Activated CD4-positive, alpha-beta memory T cell treated with anti-CD3 and anti-CD28 coated beads for 36 hours (primary cell): ENCODE measurements at regions of chr13 and their contacts with region 1.

Region 1: GRCh38 chr13:51645154-51645650 is 60.9 kb downstream of the WDFY2 start:
- DNase-seq: peak; percentile 32
- H3K4me3 Mint-ChIP-seq: peak overlapping the region; percentile 38
- H3K27ac Mint-ChIP-seq: peak overlapping the region; percentile 68
- H3K4me1 Mint-ChIP-seq: peaks cover 46% of the 10 kb centered on the region
- H3K27me3 Mint-ChIP-seq: no peaks in the 10 kb centered on the region

Region 2: GRCh38 chr13:51619614-51620013 is 25.6 kb before region 1 on chr13:
- CTCF ChIA-PET with region 1: interaction called, 3 read pairs
- POLR2A ChIA-PET with region 1: interaction called, 10 read pairs
- intact Hi-C with region 1: loop called (anchors 1 kb)
- DNase-seq: peak; percentile 38
- H3K4me3 Mint-ChIP-seq: no peak overlapping the region
- H3K27ac Mint-ChIP-seq: peak overlapping the region; percentile 50
- H3K4me1 Mint-ChIP-seq: peaks cover 44% of the 10 kb centered on the region
- H3K27me3 Mint-ChIP-seq: no peaks in the 10 kb centered on the region

Region 3: DNA sequence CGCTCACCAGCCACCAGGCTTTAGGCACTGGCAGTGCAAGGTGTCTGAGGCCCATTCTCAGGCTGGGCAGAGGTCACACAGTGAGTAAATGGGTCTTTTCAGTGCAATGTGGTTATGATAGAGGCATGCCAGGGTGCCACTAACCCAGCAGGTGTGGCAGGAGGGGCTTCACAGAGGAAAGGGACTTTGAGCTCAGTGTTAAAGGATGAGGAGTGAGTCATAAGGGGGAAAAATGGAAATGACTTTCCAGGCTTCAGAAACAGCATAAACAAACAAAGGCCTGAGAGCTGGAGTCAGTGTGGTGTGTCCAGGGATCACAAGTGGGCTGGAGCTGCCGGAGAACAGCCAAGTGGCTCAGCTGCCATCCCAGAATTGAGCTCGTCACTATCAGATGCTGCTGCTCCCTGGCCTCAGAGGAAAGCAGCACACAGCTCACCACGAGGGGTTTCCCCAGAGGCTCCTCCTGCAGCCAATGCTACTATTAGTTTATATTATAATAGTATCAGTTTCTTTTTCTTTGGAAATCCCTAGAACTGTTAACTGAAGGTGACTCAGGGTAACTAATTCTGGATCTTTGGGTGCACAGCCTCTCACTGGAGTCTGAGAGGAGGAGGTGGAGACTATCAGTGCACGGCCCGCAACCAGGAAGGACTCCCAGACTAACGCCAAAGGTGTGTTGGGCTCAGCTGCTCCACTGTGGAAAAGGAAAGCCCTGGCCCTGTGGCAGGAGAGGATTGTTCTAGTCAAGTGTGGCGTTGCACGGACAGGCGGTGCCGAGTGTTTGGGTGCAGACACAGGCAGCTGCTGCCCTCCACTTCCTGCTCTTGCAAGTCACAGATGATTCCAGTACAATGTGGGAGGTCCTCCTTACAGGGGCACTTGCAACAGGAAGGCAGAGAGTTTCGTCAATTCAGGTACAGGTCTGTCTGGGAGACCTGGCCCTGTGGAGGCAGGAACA is 119.3 kb after region 1 on chr13:
- CTCF ChIA-PET with region 1: no interaction called
- POLR2A ChIA-PET with region 1: no interaction called
- intact Hi-C with region 1: loop called (anchors 2 kb)
- DNase-seq: peak; percentile 81
- H3K4me3 Mint-ChIP-seq: peak overlapping the region; percentile 77
- H3K27ac Mint-ChIP-seq: peak overlapping the region; percentile 95
- H3K4me1 Mint-ChIP-seq: peaks cover 42% of the 10 kb centered on the region
- H3K27me3 Mint-ChIP-seq: no peaks in the 10 kb centered on the region